HEK293T (cell line): ENCODE measurements at regions of chr1 and their contacts with region 1.

Region 1: DNA sequence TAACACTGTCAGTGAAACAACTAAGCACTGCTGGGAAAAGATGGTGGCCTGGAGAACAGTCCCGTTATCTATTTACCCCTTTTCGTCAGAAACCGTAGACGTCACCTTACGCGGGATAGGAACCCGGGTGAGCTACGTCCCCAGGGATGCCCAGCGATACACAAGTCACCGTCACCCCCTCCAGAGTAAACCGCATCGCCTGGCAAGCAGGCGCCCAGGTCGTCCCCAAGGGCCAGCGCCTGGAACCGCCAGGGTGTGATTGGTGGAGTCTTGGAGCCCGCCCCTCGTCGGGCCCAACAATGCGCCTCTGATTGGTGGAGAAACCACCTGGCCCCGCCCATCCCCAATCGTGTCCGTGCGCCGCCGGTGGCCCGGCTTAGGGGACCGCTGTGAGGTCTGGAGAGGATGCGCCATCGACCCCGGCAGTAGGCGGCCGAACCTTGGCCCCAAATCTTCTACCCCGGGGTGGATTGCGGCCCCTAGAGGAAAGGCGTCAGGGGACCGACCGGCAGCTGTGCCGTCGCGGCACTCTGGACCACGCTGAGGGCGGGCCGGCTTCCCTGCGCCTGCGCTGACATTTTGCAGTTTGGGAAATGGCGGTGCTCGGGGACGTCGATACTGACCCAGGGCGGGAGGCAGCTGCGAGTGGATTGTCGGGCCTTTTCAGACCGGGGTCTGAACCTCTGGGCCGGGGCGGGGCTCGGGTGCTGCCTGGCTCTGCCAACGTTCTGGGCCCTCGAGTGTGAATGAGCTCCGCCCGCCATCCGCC is 34.4 kb downstream of the SLC2A1 start:
- DNase-seq: peak; percentile 95

Region 2: DNA sequence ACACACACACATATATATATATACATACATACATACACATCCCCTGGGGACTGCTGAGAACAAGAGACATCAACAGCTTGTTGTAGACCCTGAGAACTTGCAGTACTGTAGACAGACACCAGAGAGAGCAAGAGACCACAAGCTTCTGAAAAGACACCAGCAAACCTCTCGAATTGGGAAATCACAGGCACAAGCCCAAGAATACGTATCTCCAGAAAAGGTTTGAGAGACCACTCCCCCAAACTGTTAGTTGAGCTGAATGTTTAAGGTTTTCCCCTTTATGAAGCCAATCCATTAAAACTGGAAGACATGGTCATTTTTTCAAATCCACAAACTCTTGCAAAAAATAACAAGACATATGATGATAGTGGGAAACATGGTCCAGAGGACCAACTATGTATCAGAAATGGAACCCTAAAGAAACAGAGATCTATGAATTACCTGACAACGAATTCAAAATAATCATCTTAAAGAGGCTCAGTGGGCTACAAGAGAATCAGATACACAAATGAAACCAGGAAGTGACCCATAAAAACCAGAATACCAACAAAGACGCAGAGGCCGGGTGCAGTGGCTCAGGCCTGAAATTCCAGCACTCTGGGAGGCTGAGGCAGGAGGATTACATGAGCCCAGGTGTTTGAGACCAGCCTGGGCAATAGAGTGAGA is 10.7 kb before region 1 on chr1:
- CTCF ChIA-PET with region 1: interaction called, 15 read pairs
- POLR2A ChIA-PET with region 1: interaction called, 3 read pairs
- DNase-seq: peak; percentile 74

Region 3: DNA sequence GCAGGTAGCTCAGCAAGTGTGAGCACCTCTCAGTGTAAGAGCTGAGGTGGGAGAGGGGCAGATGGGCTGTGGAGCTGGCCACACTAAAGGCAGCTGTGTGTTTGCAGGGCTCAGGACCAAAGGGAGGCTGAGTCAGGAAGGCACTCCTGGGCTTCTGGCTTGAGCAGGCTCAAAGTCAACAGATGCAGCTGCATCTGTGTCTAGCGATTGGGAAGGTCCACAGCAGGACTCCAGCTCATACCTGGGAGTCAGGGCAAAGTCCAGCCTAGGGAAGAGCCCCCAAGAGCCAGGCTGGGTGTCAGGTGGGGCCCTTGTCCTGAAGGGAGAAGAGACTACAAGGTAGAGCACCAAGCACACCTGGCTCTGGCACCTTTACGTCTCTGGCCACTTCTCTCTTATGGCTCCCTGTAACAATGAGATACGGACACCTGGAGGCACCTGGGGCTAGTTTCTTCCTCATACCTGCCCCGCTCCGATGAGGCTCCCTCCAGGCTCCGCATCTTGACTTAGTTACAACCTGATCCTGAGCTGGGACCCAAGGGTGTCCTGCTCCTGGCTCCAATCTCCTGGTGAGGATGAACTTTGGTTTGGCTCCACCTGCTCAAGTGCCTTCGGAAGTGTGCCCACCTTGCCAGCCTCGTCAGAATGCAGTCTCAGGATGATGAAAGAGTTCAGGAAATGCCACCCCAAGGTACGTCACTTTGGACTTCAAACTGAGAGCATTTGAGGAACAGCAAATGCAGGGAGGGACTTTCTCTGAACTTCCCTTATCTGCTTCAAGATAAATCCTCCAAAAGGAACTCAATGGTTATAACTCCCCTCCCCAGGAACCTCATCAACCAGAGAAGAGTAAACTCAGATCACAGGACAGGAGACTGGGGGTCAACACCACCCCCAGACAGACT is 55.9 kb after region 1 on chr1:
- CTCF ChIA-PET with region 1: no interaction called
- POLR2A ChIA-PET with region 1: no interaction called
- DNase-seq: no peak

Region 4: DNA sequence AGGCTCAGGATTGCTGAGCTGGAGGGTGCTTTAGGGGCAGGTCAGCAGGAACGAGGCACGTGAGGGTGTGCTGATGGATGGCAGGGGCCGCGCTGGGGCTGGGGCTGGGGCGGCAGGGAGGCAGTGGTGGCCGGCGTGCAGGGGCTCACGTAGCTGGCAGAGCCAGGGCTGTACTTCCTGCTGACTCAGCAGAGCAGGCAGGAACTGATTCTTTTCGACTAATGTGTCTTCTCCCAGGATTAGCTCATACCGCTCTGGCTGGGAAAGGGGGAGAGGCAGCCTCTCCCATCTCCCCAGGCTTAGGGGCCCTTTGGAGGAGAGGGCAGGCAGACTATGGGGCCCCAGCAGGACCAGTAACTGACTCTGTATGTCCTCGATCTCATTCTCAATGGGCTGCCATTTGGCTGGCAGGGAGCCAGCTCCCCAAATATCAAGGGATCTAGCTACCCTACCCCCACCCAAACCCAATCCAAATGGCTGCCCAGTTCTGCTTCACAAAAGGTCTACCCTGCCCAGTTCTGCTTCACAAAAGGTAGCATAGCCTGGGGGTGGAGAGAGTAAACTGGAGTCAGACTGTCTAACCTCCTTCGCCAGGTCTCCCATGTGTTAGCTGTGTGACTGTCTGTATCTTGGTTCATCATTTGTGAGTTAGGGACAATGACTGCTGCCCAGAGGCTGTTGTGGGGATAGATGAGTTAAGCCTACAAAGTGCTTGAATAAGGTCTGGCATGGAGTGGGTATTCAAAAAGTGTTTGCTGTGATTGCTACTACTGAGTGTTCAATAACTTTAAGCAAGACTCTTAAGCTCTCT is 134.5 kb after region 1 on chr1:
- CTCF ChIA-PET with region 1: interaction called, 3 read pairs
- POLR2A ChIA-PET with region 1: interaction called, 10 read pairs
- DNase-seq: no peak